Activated CD8-positive, alpha-beta T cell treated with anti-CD3 and anti-CD28 coated beads for 36 hours (primary cell): ENCODE measurements at regions of chr15 and their contacts with region 1.

Region 1: GRCh38 chr15:42920519-42921227 is at the start of gene TTBK2:
- DNase-seq: peak; percentile 97
- ATAC-seq: peak; percentile 96
- H3K4me3 Mint-ChIP-seq: peak within 1 kb of the TSS; percentile 92
- H3K27ac Mint-ChIP-seq: peak within 1 kb of the TSS; percentile 91
- H3K4me1 Mint-ChIP-seq: peaks cover 29% of the 10 kb centered on the region
- H3K27me3 Mint-ChIP-seq: no peaks in the 10 kb centered on the region
- CTCF ChIP-seq: no peak
- total RNA-seq, gene TTBK2: 9.9 to 11.9 TPM

Region 2: DNA sequence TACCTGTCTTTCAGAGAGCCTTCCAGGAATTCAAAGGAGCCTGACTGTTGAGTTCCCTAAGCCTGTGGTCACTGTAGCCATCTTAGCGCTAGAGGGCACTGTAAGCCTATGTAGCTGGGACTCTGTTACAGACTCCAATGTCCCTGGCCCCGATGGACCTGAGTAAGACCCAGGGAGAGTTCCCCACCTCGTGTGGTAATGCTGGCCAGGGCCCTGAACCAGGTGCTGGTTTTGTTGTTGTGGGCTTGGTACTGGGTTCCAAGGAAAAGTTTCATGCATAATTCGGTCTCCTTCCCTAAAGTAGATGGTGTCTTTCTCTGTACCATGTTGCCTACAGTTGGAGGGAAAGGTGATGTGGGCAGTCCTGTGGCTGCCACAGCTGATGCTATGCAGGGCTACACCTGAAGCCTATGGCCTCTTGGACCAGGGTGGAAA is 216.2 kb before region 1 on chr15:
- CTCF ChIA-PET with region 1: interaction called, 32 read pairs
- POLR2A ChIA-PET with region 1: no interaction called
- intact Hi-C with region 1: loop called (anchors 5 kb)
- DNase-seq: peak; percentile 76
- ATAC-seq: peak; percentile 94
- H3K4me3 Mint-ChIP-seq: no peak overlapping the region
- H3K27ac Mint-ChIP-seq: no peak overlapping the region
- H3K4me1 Mint-ChIP-seq: peaks cover 5% of the 10 kb centered on the region
- H3K27me3 Mint-ChIP-seq: no peaks in the 10 kb centered on the region
- CTCF ChIP-seq: peak; percentile 79

Region 3: DNA sequence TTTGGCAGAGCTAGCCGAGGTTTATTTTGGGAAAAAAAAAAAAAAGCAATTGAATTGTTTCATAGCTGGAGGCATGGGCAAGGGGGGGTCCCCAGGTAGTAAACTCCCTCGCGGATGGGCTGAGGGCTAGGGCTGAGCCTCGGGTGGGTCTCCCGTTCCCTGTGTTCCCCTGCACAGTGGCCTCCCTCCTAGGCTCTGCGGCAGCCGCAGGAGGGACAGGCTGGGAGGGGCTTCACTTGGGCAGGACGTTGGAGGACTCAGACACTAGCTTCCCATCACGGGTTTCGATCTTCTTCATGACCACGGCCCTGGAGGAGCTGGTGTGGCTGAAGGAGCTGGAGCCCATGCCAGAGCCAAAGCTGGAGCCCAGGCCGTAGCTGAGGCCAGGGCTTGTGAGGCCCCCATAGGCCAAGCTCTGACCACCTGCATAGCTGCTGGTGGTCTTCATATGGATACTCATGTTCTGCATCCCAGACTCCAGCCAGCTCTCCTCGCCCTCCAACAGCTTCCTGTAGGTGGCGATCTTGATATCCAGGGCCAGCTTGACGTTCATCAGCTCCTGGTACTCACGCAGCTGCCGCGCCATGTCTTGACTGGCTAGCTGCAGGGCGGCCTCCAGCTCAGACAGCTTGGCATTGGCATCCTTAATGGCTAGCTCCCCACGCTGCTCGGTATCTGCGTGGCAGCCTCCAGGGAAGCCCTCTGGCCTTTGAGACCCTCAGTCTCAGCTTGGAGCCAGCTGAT is 119.8 kb before region 1 on chr15:
- CTCF ChIA-PET with region 1: interaction called, 19 read pairs
- POLR2A ChIA-PET with region 1: interaction called, 3 read pairs
- intact Hi-C with region 1: loop called (anchors 5 kb)
- DNase-seq: peak; percentile 15
- ATAC-seq: no peak
- H3K4me3 Mint-ChIP-seq: no peak overlapping the region
- H3K27ac Mint-ChIP-seq: no peak overlapping the region
- H3K4me1 Mint-ChIP-seq: no peaks in the 10 kb centered on the region
- H3K27me3 Mint-ChIP-seq: no peaks in the 10 kb centered on the region
- CTCF ChIP-seq: peak; percentile 23

Region 4: GRCh38 chr15:42933886-42934667 is 13.4 kb after region 1 on chr15:
- CTCF ChIA-PET with region 1: no interaction called
- POLR2A ChIA-PET with region 1: no interaction called
- intact Hi-C with region 1: no loop called
- DNase-seq: no peak
- ATAC-seq: no peak
- H3K4me3 Mint-ChIP-seq: no peak overlapping the region
- H3K27ac Mint-ChIP-seq: no peak overlapping the region
- H3K4me1 Mint-ChIP-seq: no peaks in the 10 kb centered on the region
- H3K27me3 Mint-ChIP-seq: no peaks in the 10 kb centered on the region
- CTCF ChIP-seq: no peak

Region 5: DNA sequence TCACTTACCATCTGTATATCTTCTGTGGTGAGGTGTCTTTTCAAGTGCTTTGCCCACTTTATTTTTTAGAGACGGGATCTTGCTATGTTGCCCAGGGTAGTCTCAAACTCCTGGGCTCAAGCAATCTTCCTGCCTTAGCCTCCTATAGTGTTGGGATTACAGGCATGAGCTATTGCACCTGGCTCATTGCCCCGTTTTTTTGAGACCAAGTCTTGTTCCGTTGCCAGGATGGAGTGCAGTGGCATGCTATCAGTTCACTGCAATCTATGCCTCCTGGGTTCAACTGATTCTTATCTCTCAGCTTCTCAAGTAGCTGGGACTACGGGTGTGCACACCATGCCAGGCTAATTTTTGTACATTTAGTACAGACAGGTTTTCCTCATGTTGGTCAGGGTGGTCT is 52.4 kb after region 1 on chr15:
- CTCF ChIA-PET with region 1: no interaction called
- POLR2A ChIA-PET with region 1: no interaction called
- intact Hi-C with region 1: no loop called
- DNase-seq: no peak
- ATAC-seq: no peak
- H3K4me3 Mint-ChIP-seq: no peak overlapping the region
- H3K27ac Mint-ChIP-seq: no peak overlapping the region
- H3K4me1 Mint-ChIP-seq: no peaks in the 10 kb centered on the region
- H3K27me3 Mint-ChIP-seq: no peaks in the 10 kb centered on the region
- CTCF ChIP-seq: no peak